ENCODE measurements at regions of chr18 and their contacts with region 1.

Region 1: DNA sequence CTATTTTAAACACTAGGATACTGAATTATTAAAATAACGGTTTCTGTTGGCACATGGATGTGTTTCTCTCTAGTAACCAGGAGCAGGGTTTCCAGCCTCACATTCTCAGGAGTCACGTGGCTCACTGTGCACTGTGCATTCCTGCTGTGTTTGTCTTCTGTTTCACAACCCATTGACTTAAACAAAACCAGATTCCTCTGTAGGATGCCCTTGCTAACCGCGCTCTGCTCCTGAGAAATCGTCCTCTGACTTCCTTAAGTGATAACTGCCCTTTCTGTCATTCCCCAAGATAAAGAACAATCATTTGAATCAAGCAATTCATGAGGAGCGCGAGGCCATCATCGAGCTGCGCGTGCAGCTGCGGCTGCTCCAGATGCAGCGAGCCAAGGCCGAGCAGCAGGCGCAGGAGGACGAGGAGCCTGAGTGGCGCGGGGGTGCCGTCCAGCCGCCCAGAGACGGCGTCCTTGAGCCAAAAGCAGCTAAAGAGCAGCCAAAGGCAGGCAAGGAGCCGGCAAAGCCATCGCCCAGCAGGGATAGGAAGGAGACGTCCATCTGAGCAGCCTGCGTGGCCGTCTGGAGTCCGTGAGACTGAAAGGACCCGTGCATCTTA is 60.2 kb downstream of the RALBP1 start:
- DNase-seq: no peak
- ATAC-seq: peak in 5 of 8 donors; percentile 16 to 56 (median 48)
- H3K4me3 ChIP-seq: no peak overlapping the region
- H3K27ac ChIP-seq: no peak overlapping the region
- H3K4me1 ChIP-seq: peaks cover 0 to 6% (median 0%) of the 10 kb centered on the region in 9 donors
- H3K27me3 ChIP-seq: no peaks in the 10 kb centered on the region
- CTCF ChIP-seq: no peak

Region 2: DNA sequence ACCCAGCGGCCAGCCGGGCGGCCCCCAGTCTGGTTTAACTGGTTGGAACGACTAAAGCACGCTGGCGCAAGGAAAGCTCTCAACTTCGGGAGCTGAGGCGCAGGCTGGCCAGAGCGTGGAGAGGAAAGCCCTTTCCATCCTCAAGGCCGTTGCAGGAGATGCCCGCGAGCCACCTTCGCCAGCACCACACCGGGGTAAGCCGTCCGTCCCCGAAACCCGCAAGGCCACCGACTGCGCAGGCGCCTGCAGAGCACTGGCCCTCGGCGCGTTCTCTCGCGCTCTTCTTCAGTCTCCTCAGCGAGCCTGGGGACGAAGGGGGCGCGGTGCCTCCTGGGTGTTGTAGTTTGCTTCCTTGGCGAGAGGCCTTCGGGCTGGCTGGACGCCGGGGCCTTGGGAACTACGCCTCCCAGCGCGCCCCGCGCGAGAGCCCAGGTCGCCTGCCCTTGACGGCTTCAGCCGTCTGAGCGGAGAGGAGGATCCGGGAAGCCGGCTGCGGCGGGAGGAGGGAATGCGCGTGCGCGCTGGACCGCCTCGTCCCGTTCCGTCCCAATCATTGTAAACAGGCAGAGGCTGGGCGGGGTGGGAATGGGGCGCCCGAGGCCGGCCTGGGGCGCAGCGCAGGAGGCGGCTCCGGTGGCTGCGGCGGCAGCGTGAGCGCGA is 60.4 kb before region 1 on chr18 and contains the start of gene RALBP1:
- intact Hi-C with region 1: loop called in 1 of 10 experiments (anchors 10 kb)
- DNase-seq: peak; percentile 99 to 100
- ATAC-seq: peak; percentile 97 to 100 (median 99)
- H3K4me3 ChIP-seq: peak within 1 kb of the TSS; percentile 63 to 98 (median 92)
- H3K27ac ChIP-seq: peak within 1 kb of the TSS; percentile 81 to 97 (median 93)
- H3K4me1 ChIP-seq: peaks cover 0 to 29% (median 22%) of the 10 kb centered on the region in 9 donors
- H3K27me3 ChIP-seq: no peaks in the 10 kb centered on the region
- CTCF ChIP-seq: peak in 4 of 9 donors; percentile 26 to 52 (median 50)
- total RNA-seq, gene RALBP1: 39.3 to 53.8 (median 41.8) TPM

Measured in heart right ventricle (tissue), 16 donors.